CD8-positive, alpha-beta T cell (primary cell): ENCODE measurements at regions of chr1 and their contacts with region 1.

Region 1: GRCh38 chr1:150621497-150622302 is 7.7 kb downstream of the ENSA start:
- DNase-seq: peak in 8 of 9 experiments; percentile 23 to 84 (median 68)
- ATAC-seq: peak; percentile 80
- H3K4me3 ChIP-seq: no peak overlapping the region
- H3K4me3 Mint-ChIP-seq: no peak overlapping the region
- H3K27ac ChIP-seq: peak overlapping the region in 1 of 2 experiments; percentile 62
- H3K27ac Mint-ChIP-seq: peak overlapping the region; percentile 80
- H3K4me1 ChIP-seq: peaks cover 19% of the 10 kb centered on the region
- H3K4me1 Mint-ChIP-seq: peaks cover 34% of the 10 kb centered on the region
- H3K27me3 ChIP-seq: no peaks in the 10 kb centered on the region
- H3K27me3 Mint-ChIP-seq: no peaks in the 10 kb centered on the region
- CTCF ChIP-seq: peak; percentile 74

Region 2: DNA sequence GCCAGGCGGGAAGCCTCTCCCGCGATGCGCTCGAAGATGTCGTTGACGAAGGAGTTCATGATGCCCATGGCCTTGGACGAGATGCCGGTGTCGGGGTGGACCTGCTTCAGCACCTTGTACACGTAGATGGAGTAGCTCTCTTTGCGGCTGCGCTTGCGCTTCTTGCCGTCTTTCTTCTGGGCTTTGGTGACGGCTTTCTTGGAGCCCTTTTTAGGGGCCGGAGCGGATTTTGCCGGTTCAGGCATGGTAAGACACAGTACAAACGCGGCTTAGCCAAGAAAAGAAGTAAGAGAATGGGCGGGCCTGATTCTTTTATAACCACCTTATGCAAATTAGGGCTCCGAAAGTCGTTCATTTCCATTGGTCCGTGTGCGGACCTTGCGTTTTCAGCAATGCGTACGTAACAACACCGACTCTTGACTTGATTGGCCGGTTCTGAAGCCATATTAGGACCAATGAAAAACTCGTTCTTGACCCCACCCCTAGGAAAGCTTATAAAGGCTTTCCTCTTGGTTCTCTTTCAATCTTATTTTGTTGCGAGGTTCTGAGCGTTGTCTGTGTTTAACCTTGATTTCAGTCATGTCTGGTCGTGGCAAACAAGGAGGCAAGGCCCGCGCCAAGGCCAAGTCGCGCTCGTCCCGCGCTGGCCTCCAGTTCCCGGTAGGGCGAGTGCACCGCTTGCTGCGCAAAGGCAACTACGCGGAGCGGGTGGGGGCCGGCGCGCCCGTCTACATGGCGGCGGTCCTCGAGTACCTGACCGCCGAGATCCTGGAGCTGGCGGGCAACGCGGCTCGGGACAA is 735.1 kb before region 1 on chr1:
- CTCF ChIA-PET with region 1: no interaction called
- POLR2A ChIA-PET with region 1: no interaction called
- intact Hi-C with region 1: no loop called
- DNase-seq: peak; percentile 73 to 99 (median 82)
- ATAC-seq: peak; percentile 64
- H3K4me3 ChIP-seq: peak overlapping the region; percentile 69 to 74
- H3K4me3 Mint-ChIP-seq: no peak overlapping the region
- H3K27ac ChIP-seq: peak overlapping the region; percentile 91 to 95
- H3K27ac Mint-ChIP-seq: no peak overlapping the region
- H3K4me1 ChIP-seq: peaks cover 32% of the 10 kb centered on the region
- H3K4me1 Mint-ChIP-seq: peaks cover 13% of the 10 kb centered on the region
- H3K27me3 ChIP-seq: no peaks in the 10 kb centered on the region
- H3K27me3 Mint-ChIP-seq: no peaks in the 10 kb centered on the region
- CTCF ChIP-seq: no peak

Region 3: DNA sequence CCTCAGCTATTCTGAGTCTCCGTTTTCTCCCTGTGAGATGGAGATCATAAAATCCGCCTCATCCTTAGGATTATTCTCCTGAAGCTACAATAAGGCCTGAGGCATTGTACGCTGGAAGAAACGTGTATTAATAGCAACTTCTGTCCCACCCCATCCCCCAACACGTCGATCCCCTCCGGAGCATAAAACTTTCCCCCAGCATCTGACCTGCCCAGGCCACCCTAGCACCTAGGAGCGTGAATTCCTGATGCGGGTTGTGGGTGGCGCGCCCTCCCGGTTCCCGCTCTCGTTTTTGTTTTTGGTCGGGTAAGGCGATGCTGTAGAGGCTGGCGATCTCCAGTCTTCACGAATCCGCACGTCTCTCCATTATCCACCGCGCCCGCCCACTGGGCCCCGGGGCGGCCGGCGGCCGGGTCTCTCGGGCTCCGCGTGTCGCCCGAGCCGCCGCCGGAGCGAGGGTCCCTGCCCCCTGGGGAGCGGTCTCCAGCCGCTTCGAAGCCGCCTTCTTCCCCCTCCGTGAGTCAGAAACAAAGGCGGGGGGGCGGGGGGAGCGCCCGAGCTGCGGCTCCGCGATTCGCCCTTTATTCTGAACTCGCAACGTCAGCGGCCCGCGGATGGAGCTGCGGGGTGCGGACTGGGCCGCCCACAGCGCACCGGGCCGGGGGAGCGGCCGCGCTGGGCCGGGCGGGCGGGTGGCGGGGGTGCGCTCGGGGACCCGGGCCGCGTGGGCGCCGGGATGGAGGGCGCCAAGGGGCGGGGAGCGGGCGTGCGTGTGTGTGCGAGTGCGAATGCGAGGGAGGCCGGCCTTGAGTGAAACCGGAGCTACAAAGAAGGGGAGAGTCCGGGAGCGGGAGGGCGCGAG is 472.2 kb before region 1 on chr1 and contains the start of gene PLEKHO1:
- CTCF ChIA-PET with region 1: no interaction called
- POLR2A ChIA-PET with region 1: no interaction called
- intact Hi-C with region 1: no loop called
- DNase-seq: peak; percentile 58 to 90 (median 85)
- ATAC-seq: peak; percentile 63
- H3K4me3 ChIP-seq: peak within 1 kb of the TSS; percentile 69 to 87
- H3K4me3 Mint-ChIP-seq: peak within 1 kb of the TSS; percentile 95
- H3K27ac ChIP-seq: peak within 1 kb of the TSS; percentile 72 to 79
- H3K27ac Mint-ChIP-seq: peak within 1 kb of the TSS; percentile 97
- H3K4me1 ChIP-seq: peaks cover 36% of the 10 kb centered on the region
- H3K4me1 Mint-ChIP-seq: peaks cover 70% of the 10 kb centered on the region
- H3K27me3 ChIP-seq: no peaks in the 10 kb centered on the region
- H3K27me3 Mint-ChIP-seq: no peaks in the 10 kb centered on the region
- CTCF ChIP-seq: no peak
- total RNA-seq, gene PLEKHO1: 82.5 to 90.1 TPM

Region 4: DNA sequence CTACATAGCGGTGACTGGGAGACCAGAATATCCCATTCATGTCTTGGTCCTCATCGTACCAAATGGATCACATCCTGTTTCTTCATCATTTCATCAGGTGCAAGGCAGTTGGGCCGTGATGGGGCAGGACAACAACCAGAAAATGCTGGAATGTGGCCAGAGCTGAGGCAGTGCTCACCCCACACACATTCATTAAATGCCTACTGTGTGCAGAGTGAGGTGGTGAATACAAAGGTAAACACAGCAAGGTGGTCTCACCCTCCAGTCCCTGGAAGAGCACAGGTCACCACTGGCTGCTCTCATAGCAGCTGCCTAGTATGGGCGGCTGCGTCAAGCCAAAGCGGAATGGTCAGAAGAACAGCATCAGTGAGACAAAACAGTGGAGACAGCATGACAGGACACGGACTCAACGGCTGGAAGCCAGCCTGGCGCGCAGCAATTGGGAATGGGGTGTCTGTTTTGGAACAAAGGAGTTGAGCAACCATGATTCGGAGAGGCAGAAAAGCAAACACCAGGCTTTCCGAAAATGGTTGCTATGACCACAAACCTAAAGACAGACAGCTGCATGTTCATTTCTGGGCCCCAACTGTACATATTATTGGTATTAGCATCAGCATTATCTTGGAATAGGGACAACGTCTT is 78.1 kb before region 1 on chr1:
- CTCF ChIA-PET with region 1: no interaction called
- POLR2A ChIA-PET with region 1: no interaction called
- intact Hi-C with region 1: no loop called
- DNase-seq: no peak
- ATAC-seq: no peak
- H3K4me3 ChIP-seq: no peak overlapping the region
- H3K4me3 Mint-ChIP-seq: no peak overlapping the region
- H3K27ac ChIP-seq: no peak overlapping the region
- H3K27ac Mint-ChIP-seq: no peak overlapping the region
- H3K4me1 ChIP-seq: peaks cover 3% of the 10 kb centered on the region
- H3K4me1 Mint-ChIP-seq: peaks cover 3% of the 10 kb centered on the region
- H3K27me3 ChIP-seq: peaks cover 0 to 13% of the 10 kb centered on the region in 2 experiments
- H3K27me3 Mint-ChIP-seq: peaks cover 28% of the 10 kb centered on the region
- CTCF ChIP-seq: no peak

Region 5: DNA sequence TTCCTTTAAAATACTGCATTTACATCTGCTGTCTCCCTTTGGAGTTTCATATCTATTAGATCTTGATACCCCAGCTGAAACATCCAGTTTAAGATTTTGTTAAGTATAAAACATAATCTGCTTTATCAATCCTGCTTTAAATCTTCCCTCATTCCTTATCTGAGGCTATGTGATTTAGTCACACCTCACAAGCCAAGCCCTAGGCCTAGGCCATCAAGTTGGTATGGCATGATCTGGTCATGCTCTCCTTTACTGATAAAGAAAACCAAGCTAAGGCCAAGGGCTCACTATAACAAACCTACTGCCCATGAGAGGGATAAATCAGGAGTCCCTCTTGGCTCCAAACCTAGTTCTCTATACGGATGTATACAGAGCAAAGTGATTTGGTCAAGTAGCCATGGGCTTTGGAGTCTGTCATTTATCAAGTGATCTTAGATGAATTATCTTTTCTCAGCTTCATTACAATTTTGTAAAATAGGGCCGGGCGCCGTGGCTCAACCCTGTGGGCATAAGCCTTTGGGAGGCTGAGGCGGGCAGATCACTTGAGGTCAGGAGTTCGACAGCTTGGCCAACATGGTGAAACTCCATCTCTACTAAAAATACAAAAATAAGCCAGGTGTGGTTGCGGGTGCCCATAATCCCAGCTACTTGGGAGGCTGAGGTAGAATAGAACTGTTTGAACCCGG is 15.1 kb before region 1 on chr1:
- CTCF ChIA-PET with region 1: interaction called, 12 read pairs
- POLR2A ChIA-PET with region 1: no interaction called
- intact Hi-C with region 1: loop called in 1 of 2 experiments (anchors 1 kb)
- DNase-seq: no peak
- ATAC-seq: no peak
- H3K4me3 ChIP-seq: no peak overlapping the region
- H3K4me3 Mint-ChIP-seq: no peak overlapping the region
- H3K27ac ChIP-seq: no peak overlapping the region
- H3K27ac Mint-ChIP-seq: no peak overlapping the region
- H3K4me1 ChIP-seq: peaks cover 12% of the 10 kb centered on the region
- H3K4me1 Mint-ChIP-seq: peaks cover 14% of the 10 kb centered on the region
- H3K27me3 ChIP-seq: no peaks in the 10 kb centered on the region
- H3K27me3 Mint-ChIP-seq: no peaks in the 10 kb centered on the region
- CTCF ChIP-seq: no peak

Region 6: GRCh38 chr1:150661156-150661555 is 39.5 kb after region 1 on chr1:
- CTCF ChIA-PET with region 1: no interaction called
- POLR2A ChIA-PET with region 1: no interaction called
- intact Hi-C with region 1: no loop called
- DNase-seq: no peak
- ATAC-seq: no peak
- H3K4me3 ChIP-seq: no peak overlapping the region
- H3K4me3 Mint-ChIP-seq: no peak overlapping the region
- H3K27ac ChIP-seq: no peak overlapping the region
- H3K27ac Mint-ChIP-seq: no peak overlapping the region
- H3K4me1 ChIP-seq: no peaks in the 10 kb centered on the region
- H3K4me1 Mint-ChIP-seq: peaks cover 3% of the 10 kb centered on the region
- H3K27me3 ChIP-seq: no peaks in the 10 kb centered on the region
- H3K27me3 Mint-ChIP-seq: no peaks in the 10 kb centered on the region
- CTCF ChIP-seq: no peak